ENCODE measurements at regions of chr3 and their contacts with region 1.

Region 1: DNA sequence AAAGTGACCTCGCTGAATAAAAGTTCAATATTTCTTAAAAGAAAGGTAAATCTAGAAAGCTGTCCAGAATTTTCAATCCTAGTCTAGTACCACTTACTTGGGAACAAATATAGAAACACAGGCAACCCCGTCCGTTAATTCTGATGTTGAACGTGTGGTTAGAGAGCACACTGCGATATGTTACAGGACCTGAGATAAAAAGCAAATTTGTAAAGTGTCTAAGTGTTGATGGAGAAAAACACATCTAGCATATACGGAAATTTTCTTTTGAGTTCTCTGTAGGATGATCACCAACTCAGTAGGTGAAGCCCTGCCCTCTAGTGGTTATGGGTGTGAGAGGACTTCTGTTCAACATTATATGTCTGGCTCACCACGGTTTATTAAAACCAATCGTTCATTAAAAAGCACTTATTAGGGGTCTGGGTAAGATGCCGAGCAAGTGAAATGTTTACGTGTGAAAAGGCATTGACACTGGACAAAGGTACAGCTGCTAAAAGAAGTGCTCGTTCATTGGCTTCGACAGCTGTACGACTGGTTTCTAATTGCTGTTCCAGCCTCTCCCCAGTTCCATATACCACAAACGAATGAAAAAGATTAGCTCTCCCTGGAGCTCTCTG is 1.0 kb upstream of the ATP2C1 start:
- DNase-seq: peak; percentile 37
- H3K4me3 ChIP-seq: peak overlapping the region; percentile 86
- H3K27ac ChIP-seq: peak overlapping the region; percentile 86
- H3K27me3 ChIP-seq: no peaks in the 10 kb centered on the region
- CTCF ChIP-seq: peak; percentile 91

Region 2: DNA sequence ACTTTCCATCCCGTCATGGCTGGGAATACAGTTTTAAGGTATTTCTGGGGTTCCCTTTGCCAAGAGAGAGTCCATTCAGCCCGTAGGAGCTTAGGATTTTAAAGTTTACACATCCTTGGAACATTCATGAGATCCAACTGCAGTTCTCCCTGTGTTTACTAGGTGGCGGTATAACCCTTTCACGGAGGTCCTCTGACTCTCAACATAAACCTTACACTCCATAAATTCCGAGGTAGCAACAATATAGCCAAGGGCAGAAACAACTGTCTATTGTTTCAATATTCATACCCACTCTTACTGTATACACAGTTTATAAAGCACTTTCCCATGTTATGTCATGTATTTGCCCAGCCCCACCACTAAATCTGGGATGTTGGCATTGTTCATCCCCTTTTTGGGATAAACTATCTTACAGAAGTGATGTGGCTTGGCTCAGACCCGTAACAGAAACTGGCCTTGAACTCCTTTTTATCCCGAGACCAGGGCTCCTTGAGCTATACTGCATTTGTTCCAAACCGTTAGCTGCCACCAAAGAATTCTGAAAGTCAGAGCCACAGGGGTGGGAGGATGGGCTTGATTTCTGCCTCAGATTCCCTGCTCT is 616.6 kb before region 1 on chr3:
- CTCF ChIA-PET with region 1: interaction called, 13 read pairs
- POLR2A ChIA-PET with region 1: no interaction called
- DNase-seq: peak; percentile 20
- H3K4me3 ChIP-seq: no peak overlapping the region
- H3K27ac ChIP-seq: no peak overlapping the region
- H3K27me3 ChIP-seq: no peaks in the 10 kb centered on the region
- CTCF ChIP-seq: peak; percentile 96

Region 3: GRCh38 chr3:130490241-130490640 is 402.6 kb before region 1 on chr3:
- CTCF ChIA-PET with region 1: no interaction called
- POLR2A ChIA-PET with region 1: no interaction called
- DNase-seq: no peak
- H3K4me3 ChIP-seq: no peak overlapping the region
- H3K27ac ChIP-seq: no peak overlapping the region
- H3K27me3 ChIP-seq: no peaks in the 10 kb centered on the region
- CTCF ChIP-seq: no peak

Region 4: GRCh38 chr3:130609166-130609979 is 283.5 kb before region 1 on chr3:
- CTCF ChIA-PET with region 1: no interaction called
- POLR2A ChIA-PET with region 1: no interaction called
- DNase-seq: no peak
- H3K4me3 ChIP-seq: no peak overlapping the region
- H3K27ac ChIP-seq: no peak overlapping the region
- H3K27me3 ChIP-seq: no peaks in the 10 kb centered on the region
- CTCF ChIP-seq: no peak

Region 5: DNA sequence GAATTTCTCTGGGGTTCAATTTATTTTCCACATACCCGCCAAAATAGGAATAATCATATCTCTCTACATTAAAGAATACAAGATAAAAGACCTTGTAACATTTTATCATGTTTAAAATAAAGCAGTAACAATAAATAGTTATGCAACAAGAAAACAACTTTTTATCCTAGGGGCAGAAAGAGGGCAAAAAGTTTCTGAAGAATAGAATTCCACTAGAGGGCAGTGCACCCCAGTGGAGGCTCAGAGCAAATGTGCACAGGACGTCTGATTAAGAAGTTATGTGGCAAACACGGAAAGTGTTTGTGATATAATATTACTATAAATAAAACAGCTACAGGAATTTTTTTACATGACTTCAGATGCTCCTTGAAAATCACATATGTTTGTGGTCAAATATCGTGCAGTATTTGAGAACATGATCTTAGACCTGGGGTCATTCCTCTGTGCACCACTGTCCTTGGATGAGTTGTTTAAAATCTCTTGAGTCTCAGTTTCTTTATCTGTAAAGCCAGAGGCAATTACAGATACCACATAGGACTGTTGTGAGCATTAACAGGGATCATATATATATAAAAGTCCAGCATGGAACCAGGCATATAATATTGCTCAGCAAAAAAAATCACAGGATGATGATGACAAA is 133.0 kb before region 1 on chr3:
- CTCF ChIA-PET with region 1: interaction called, 56 read pairs
- POLR2A ChIA-PET with region 1: interaction called, 3 read pairs
- DNase-seq: peak; percentile 15
- H3K4me3 ChIP-seq: no peak overlapping the region
- H3K27ac ChIP-seq: no peak overlapping the region
- H3K27me3 ChIP-seq: peaks cover 2% of the 10 kb centered on the region
- CTCF ChIP-seq: peak; percentile 88

Region 6: DNA sequence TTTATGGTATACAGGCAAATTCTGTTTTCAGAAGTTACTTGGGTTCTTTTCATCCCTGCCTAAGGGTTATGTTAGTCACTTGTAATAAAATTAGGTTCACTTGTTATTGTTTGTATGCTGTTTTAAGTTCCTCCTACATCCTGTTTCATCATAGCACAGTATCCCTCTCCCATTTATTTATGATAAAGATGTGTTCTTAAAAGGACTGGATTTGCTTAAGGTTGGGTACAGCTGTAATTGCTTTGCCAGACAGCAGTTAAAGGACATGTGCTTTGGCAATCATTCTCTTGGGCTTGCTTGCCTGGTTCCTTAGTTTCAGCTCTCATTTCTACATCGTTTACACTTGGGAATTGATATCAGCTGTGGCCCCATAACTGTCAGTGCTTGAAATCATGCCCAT is 12.7 kb after region 1 on chr3:
- CTCF ChIA-PET with region 1: interaction called, 14 read pairs
- POLR2A ChIA-PET with region 1: no interaction called
- DNase-seq: no peak
- H3K4me3 ChIP-seq: no peak overlapping the region
- H3K27ac ChIP-seq: no peak overlapping the region
- H3K27me3 ChIP-seq: no peaks in the 10 kb centered on the region
- CTCF ChIP-seq: no peak

Region 7: DNA sequence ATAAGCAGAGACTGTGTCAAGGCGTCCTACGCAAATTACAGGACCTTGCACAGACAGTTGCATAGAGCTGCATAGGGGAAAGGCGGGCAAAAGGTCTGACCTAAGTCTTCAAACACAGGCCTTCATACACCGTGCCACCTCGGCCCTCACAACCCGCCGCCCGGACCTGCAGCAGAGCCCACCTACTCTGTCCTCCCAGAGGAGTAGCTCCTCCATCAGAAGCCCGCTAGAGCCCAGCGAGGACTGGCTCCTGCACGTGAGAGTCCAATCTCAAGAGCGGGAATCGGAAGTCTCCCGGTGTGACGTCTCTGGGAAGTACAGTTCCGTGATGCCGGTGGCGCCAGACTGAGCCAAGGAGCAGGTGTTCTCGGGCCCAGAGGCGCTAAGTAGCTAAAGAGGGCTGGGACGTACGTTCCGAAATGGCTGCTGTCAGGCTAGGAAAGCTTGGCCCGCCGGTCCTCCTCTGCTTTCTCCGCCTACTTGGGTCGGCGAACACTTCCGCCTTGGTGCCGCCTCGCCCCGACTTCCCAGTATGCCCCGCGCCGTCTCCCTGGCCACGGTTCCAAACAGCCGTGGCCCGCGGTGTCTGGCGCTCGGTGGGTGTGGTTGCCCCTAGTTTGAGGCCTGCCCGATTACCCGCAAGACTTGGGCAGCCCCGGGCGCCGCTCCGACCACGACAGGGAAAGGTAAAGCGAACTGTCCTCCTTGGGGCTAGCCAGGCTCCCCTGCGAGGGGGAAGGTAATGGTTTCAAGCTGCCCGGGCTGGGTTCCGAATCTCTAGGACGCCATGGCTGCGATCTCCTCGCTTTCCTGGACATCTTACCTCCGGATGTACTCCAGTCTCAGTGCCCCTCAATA is 133.7 kb after region 1 on chr3 and contains the starts of genes ASTE1 and NEK11:
- CTCF ChIA-PET with region 1: interaction called, 9 read pairs
- POLR2A ChIA-PET with region 1: interaction called, 16 read pairs
- DNase-seq: peak; percentile 34
- H3K4me3 ChIP-seq: peak within 1 kb of the TSS; percentile 89
- H3K27ac ChIP-seq: peak within 1 kb of the TSS; percentile 74
- H3K27me3 ChIP-seq: no peaks in the 10 kb centered on the region
- CTCF ChIP-seq: no peak
- polyA plus RNA-seq, gene ASTE1: 6.4 and 8.5 TPM in 2 replicates
- polyA plus RNA-seq, gene NEK11: 3.2 and 4.0 TPM in 2 replicates